HEK293T (cell line): ENCODE measurements at regions of chr4 and their contacts with region 1.

Region 1: DNA sequence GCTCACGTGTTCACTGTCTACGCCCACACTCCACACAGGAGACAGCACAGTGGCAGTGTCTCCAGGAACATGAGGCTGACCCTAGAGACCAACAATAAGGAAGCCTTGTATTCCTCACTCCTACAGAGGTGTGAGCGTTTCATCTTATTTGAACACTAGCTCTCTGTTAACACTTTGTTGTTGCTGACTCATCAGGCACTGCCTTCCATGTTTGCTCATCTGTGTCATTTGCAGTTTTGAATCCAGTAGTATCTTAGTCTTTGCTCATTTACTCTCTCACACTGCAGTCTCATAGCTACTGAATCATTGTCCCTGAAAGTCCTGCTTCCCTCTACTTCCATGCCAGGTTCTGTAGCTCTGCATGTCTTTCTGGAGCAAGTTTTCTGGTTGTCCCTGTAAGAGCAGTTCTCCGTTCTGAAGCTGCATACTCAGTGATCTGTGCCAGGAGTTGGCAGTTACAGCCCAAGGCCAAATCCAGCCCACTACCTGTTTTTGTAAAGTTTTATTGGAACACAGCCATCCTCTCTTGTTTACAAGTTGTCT is 80.3 kb upstream of the DCLK2 start:
- DNase-seq: no peak

Region 2: DNA sequence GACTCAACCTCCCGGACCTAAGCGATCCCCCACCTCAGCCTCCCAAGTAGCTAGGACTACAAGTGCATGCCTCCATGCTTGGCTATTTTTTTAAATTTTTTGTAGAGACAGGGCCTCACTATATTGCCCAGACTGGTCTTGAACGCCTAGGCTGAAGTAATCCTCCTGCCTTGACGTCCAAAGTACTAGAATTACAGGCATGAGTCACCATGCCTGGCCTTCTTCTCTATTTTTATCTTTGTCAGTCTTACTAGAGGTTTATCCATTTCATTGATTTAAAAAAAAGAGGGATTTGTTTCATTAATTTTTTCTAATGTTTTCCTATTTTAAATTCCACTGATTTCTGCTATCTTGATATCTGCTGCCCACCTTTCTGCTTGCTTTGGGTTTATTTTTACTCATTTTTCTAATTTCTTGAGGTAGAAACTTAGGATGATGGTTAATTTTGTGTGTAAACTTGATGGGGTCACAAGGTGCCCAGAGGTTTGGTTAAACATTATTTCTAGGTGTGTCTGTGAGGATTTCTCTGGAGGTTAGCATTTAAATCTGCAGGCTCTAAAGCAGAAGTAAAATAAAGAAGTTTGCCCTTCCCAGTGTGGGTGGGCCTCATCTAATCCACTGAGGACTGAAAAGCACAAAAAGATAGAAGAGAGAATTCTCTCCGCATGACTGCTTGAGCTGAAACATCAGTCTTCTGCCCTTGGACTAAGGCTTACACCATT is 35.9 kb before region 1 on chr4:
- CTCF ChIA-PET with region 1: no interaction called
- POLR2A ChIA-PET with region 1: no interaction called
- DNase-seq: no peak

Region 3: GRCh38 chr4:150126201-150126863 is 128.4 kb after region 1 on chr4:
- CTCF ChIA-PET with region 1: no interaction called
- POLR2A ChIA-PET with region 1: no interaction called
- DNase-seq: no peak

Region 4: DNA sequence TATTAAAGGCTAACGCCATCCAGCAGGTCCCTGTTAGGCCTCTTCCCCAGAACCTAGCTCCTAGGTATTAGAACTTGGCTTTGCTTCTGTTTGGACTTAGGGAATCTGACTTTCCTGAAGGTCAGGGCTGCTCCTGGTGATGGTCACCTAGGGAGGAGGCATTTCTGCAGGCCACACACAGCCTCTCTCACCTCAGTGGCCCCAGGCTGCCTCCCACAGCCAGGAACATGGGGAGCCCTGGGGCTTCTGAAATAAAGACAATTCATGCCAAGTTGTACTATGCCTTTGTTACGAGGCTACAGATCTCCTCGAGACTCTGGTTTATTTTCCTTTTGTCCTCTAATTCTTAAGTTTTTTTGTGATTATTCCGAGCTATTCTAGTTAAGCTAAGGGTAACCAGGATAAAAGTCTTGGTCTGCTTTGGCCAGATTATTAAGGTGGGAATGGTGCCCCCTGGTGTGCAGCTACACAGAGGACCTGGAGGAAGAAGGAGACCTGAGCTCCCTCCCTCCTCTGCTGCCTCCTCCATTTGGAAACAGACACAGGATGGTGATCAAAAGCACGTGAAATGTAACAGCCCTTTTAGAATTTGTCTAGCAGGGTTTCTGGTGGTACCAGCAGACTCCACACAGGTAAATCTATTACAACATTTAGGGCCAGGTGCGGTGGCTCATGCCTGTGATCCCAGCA is 211.3 kb after region 1 on chr4:
- CTCF ChIA-PET with region 1: interaction called, 10 read pairs
- POLR2A ChIA-PET with region 1: no interaction called
- DNase-seq: peak; percentile 51